Posterior vena cava (tissue), 2 donors: ENCODE measurements at regions of chr18 and their contacts with region 1.

Region 1: GRCh38 chr18:74495581-74496507 is at the start of gene CNDP2:
- DNase-seq: peak; percentile 100
- total RNA-seq, gene CNDP2: 73.5 to 75.0 TPM

Region 2: GRCh38 chr18:74597662-74598349 is 102.0 kb after region 1 on chr18 and contains the start of gene ZNF407:
- intact Hi-C with region 1: loop called in 1 of 2 experiments (anchors 5 kb)
- DNase-seq: peak; percentile 96
- total RNA-seq, gene ZNF407: 13.4 to 14.1 TPM